HEK293 (cell line): ENCODE measurements at regions of chr14 and their contacts with region 1.

Region 1: DNA sequence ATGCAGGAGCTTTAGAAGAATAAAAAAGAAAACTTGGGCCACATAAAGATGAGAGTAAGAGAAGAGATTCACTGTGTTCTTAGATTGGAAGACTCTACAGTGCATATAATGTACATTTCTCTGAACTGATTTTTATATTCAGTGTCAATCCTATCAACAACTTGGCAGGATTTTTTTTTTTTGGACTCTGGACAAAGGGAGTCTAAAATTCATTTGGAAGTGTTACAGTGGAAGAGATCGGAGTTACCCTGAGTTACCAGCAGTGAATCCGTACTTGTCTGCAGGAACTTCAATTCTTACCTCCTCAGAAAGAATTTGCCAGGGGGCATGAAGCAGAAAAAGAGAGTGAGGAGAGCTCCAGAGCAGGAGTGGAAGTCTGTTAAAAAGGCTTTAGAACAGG is 24.0 kb downstream of the SERPINA11 start:
- H3K4me3 ChIP-seq: no peak overlapping the region
- H3K27ac ChIP-seq: no peak overlapping the region
- H3K4me1 ChIP-seq: no peaks in the 10 kb centered on the region
- CTCF ChIP-seq: no peak

Region 2: GRCh38 chr14:94282991-94283723 is 145.5 kb before region 1 on chr14:
- CTCF ChIA-PET with region 1: no interaction called
- POLR2A ChIA-PET with region 1: no interaction called
- H3K4me3 ChIP-seq: no peak overlapping the region
- H3K27ac ChIP-seq: no peak overlapping the region
- H3K4me1 ChIP-seq: no peaks in the 10 kb centered on the region
- CTCF ChIP-seq: no peak

Region 3: GRCh38 chr14:94448071-94448808 is 19.6 kb after region 1 on chr14:
- CTCF ChIA-PET with region 1: interaction called, 13 read pairs
- POLR2A ChIA-PET with region 1: no interaction called
- H3K4me3 ChIP-seq: no peak overlapping the region
- H3K27ac ChIP-seq: no peak overlapping the region
- H3K4me1 ChIP-seq: no peaks in the 10 kb centered on the region
- CTCF ChIP-seq: no peak